ENCODE measurements at regions of chr15 and their contacts with region 1.

Region 1: GRCh38 chr15:42273102-42273899 is at the starts of genes GANC and TMEM87A:
- DNase-seq: peak; percentile 97 to 99 (median 98)
- H3K4me3 ChIP-seq: peak within 1 kb of the TSS; percentile 58 to 92 (median 81)
- H3K27ac ChIP-seq: peak within 1 kb of the TSS; percentile 90 to 100 (median 99)
- H3K27me3 ChIP-seq: no peaks in the 10 kb centered on the region
- CTCF ChIP-seq: peak in 19 of 56 donors; percentile 4 to 44 (median 21)
- total RNA-seq, gene GANC: 15.2 to 70.3 (median 33.9) TPM
- total RNA-seq, gene TMEM87A: 25.3 to 75.8 (median 42.8) TPM

Region 2: GRCh38 chr15:42226648-42227047 is 46.7 kb before region 1 on chr15:
- intact Hi-C with region 1: loop called in 1 of 2 experiments (anchors 5 kb)
- DNase-seq: peak in 7 of 10 donors; percentile 27 to 67 (median 40)
- H3K4me3 ChIP-seq: no peak overlapping the region
- H3K27ac ChIP-seq: peak overlapping the region in 45 of 59 donors; percentile 1 to 86 (median 49)
- H3K27me3 ChIP-seq: no peaks in the 10 kb centered on the region
- CTCF ChIP-seq: peak in 51 of 56 donors; percentile 13 to 74 (median 46)

Region 3: DNA sequence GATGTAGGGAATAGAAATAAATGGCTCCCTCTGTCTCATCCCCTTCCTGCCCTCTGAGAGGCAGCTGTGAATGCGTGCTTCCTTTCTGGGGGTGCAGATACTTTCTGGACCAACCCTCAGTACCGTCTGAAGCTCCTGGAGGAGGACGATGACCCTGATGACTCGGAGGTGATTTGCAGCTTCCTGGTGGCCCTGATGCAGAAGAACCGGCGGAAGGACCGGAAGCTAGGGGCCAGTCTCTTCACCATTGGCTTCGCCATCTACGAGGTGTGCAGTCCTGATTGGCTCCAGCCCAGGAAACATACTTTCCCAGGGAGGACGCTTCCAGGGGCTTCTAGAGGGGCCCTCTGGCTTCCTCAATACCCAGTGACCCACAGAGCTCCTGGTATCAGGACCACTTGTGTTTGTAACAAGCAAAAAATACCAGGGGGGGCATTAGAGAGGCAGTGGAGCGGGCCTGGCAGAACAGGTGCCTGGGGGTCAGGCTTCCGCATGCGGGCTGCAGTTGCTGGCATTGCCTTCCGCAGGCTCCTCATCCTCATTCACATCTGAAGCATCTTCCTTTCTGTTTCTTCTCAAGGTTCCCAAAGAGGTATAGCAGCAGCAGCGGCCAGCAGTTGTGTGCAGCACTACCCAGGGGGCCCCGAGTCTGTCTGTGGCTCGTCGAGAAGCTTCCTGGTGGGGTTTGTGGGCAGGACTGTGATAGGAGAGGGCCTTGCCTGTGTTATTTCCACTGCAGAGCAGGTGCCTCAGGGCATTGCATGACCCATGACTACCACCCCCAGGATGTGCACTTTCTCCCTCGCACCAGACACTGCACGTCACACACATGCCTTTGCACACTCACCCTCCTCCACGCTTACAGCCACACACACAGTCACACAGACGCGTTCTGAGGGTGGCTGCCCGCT is 128.5 kb after region 1 on chr15:
- intact Hi-C with region 1: loop called (anchors 5 to 10 kb)
- DNase-seq: no peak
- H3K4me3 ChIP-seq: no peak overlapping the region
- H3K27ac ChIP-seq: peak overlapping the region in 50 of 59 donors; percentile 19 to 100 (median 96)
- H3K27me3 ChIP-seq: no peaks in the 10 kb centered on the region
- CTCF ChIP-seq: no peak

Region 4: DNA sequence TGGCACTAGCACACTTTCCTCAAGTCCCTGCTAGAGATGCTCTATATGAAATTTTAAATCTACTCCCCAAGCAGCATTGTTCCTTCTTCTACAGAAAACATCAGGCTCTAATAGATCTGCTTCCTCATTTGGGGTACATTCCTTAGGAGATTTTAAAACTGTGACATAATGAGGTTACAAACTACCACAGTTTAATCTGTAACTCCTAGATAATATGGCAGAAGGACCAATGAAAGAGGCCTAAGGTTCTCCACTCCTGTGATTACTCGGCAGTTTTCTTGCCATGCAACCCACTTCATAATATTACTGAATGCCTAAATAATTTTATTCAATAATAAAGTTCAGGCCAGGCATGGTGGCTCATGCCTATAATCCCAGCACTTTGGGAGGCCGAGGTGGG is 201.5 kb after region 1 on chr15:
- intact Hi-C with region 1: loop called in 1 of 2 experiments (anchors 10 kb)
- DNase-seq: no peak
- H3K4me3 ChIP-seq: no peak overlapping the region
- H3K27ac ChIP-seq: peak overlapping the region in 12 of 59 donors; percentile 1 to 52 (median 14)
- H3K27me3 ChIP-seq: no peaks in the 10 kb centered on the region
- CTCF ChIP-seq: no peak

Region 5: GRCh38 chr15:42495361-42496212 is 222.3 kb after region 1 on chr15 and contains the start of gene SNAP23:
- intact Hi-C with region 1: loop called in 1 of 2 experiments (anchors 5 kb)
- DNase-seq: peak; percentile 84 to 96 (median 92)
- H3K4me3 ChIP-seq: peak within 1 kb of the TSS; percentile 50 to 98 (median 83)
- H3K27ac ChIP-seq: peak within 1 kb of the TSS; percentile 81 to 100 (median 97)
- H3K27me3 ChIP-seq: no peaks in the 10 kb centered on the region
- CTCF ChIP-seq: peak in 19 of 56 donors; percentile 6 to 45 (median 19)
- total RNA-seq, gene SNAP23: 20.3 to 91.7 (median 37.6) TPM

Region 6: DNA sequence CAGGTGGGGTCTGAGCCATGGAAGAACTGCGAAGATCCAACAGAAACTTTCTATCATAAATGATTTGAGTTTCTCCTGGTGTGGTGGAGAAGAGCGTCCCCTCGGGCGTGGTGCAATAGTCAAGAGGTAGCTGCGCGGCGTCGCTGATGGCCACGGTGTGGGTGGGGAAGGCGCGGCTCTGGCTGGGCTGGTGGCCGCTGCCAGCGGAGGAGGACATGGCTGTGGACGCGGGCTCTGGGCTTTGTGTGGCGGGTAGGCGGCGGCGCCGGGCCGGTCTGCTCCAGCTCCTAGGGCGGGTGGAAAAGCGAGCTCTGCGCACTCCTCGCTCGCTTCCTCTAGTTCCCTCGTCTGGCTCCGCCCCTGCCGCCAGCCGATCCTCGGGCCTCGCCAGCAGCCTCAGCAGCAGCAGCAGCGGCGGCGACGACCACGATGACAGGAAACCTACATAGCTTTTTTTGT is 308.0 kb after region 1 on chr15:
- intact Hi-C with region 1: loop called in 1 of 2 experiments (anchors 5 kb)
- DNase-seq: peak; percentile 80 to 93 (median 90)
- H3K4me3 ChIP-seq: peak overlapping the region; percentile 24 to 72 (median 55)
- H3K27ac ChIP-seq: peak overlapping the region; percentile 51 to 97 (median 89)
- H3K27me3 ChIP-seq: no peaks in the 10 kb centered on the region
- CTCF ChIP-seq: peak in 31 of 56 donors; percentile 11 to 47 (median 24)

Region 7: GRCh38 chr15:43800286-43801141 is 1527.2 kb after region 1 on chr15 and contains the start of gene HYPK:
- intact Hi-C with region 1: loop called in 1 of 2 experiments (anchors 5 kb)
- DNase-seq: peak; percentile 92 to 97 (median 94)
- H3K4me3 ChIP-seq: peak within 1 kb of the TSS; percentile 57 to 100 (median 90)
- H3K27ac ChIP-seq: peak within 1 kb of the TSS; percentile 94 to 100 (median 99)
- H3K27me3 ChIP-seq: no peaks in the 10 kb centered on the region
- CTCF ChIP-seq: peak in 18 of 56 donors; percentile 7 to 39 (median 24)
- total RNA-seq, gene HYPK: 6.8 to 38.8 (median 17.4) TPM

Measured in dorsolateral prefrontal cortex (tissue), 120 donors.